Naive thymus-derived CD4-positive, alpha-beta T cell (primary cell): ENCODE measurements at regions of chr17 and their contacts with region 1.

Region 1: DNA sequence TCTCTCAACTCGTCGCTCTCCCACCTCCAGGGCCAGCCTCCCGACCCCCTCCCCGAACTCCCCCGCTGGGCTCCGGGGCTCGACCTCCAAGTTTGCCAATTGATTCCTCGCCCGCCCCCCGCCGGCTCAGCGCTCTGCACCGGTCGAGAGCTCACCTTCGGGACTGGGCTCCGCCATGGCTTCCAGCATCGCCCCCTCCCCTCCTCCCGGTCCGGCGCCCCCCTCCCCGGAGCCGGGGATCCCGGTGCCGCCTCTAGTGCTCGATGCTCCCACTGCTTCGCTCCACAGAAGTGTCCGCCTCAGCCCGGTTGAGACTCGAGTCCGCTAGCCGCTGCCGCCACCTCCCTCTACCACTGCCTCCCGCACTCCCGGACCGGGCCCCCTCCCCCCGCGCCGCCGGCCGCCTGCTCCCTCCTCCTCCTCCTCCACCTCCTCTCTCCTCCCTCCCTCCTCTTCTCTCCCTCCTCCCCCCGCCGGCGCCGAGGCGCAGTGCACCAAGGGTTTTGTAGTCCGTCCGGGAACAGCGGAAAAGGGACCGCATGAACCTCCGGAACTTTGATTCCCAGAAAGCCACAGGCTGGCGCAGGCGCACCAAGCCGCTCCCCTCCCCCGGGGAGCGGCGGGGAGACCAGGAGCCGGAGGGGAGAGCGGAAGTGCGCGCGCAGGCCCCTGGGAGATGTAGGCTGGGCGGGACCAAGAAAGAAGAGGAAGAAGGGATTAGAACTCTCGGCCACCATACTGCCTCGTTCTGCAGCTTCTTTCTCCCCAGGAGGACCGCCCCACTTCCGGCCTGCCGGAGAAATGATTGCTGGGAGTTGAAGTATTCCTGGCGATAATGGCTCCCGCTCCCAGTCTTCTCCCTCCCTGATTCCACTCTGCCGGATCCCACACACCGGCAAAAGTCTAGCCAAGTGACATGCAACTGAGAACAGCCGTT is at the start of gene PHF23:
- DNase-seq: peak; percentile 91 to 98 (median 97)
- ATAC-seq: peak; percentile 78
- H3K4me3 ChIP-seq: peak within 1 kb of the TSS; percentile 76
- H3K4me3 Mint-ChIP-seq: peak within 1 kb of the TSS; percentile 88 to 98 (median 95)
- H3K27ac ChIP-seq: peak within 1 kb of the TSS; percentile 92
- H3K27ac Mint-ChIP-seq: peak within 1 kb of the TSS; percentile 55 to 100 (median 95)
- H3K4me1 ChIP-seq: peaks cover 32 to 44% of the 10 kb centered on the region in 2 donors
- H3K4me1 Mint-ChIP-seq: peaks cover 38 to 67% (median 60%) of the 10 kb centered on the region in 7 donors
- H3K27me3 ChIP-seq: no peaks in the 10 kb centered on the region
- H3K27me3 Mint-ChIP-seq: peaks cover 0 to 7% (median 0%) of the 10 kb centered on the region in 5 donors
- total RNA-seq, gene PHF23: 12.3 to 58.7 (median 55.2) TPM

Region 2: GRCh38 chr17:7035591-7036368 is 203.6 kb before region 1 on chr17 and contains the start of gene SLC16A13:
- CTCF ChIA-PET with region 1: no interaction called
- POLR2A ChIA-PET with region 1: interaction called, 14 read pairs
- intact Hi-C with region 1: loop called in 1 of 2 experiments (anchors 2 kb)
- DNase-seq: peak; percentile 87 to 99 (median 97)
- ATAC-seq: peak; percentile 95
- H3K4me3 ChIP-seq: peak within 1 kb of the TSS; percentile 67
- H3K4me3 Mint-ChIP-seq: peak within 1 kb of the TSS; percentile 89 to 95 (median 93)
- H3K27ac ChIP-seq: peak within 1 kb of the TSS; percentile 94
- H3K27ac Mint-ChIP-seq: peak within 1 kb of the TSS; percentile 96 to 99 (median 98)
- H3K4me1 ChIP-seq: peaks cover 26 to 36% of the 10 kb centered on the region in 2 donors
- H3K4me1 Mint-ChIP-seq: peaks cover 39 to 80% (median 58%) of the 10 kb centered on the region in 7 donors
- H3K27me3 ChIP-seq: no peaks in the 10 kb centered on the region
- H3K27me3 Mint-ChIP-seq: no peaks in the 10 kb centered on the region
- total RNA-seq, gene SLC16A13: 3.4 to 20.9 (median 15.0) TPM

Region 3: DNA sequence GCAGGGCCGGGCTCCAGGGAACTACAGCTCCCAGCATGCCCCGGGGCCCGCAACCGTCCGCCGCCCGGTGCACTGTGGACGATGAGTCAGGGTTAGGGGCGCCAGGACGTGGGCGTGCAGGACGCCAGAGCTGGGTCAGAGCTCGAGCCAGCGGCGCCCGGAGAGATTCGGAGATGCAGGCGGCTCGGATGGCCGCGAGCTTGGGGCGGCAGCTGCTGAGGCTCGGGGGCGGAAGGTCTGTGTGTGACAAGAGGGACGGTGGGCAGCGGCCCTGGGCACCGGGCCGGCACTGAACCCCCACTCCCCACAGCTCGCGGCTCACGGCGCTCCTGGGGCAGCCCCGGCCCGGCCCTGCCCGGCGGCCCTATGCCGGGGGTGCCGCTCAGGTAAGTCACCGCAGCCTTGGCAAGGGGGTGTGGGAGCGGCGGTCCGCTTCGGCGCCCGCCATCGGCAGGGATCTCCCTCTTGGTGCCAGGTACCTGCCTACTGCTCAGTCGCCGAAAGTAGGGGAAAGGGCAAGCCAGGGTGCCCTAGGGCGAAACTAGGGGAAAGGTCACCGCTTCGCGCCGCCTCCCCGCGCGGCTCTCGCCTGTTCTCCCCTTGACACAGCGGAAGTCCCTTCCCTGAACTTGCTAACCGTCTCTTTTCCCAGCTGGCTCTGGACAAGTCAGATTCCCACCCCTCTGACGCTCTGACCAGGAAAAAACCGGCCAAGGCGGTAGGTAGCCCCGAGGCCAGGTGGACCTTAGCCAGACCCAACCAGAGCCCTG is 19.4 kb before region 1 on chr17 and contains the starts of genes ACADVL and DLG4:
- CTCF ChIA-PET with region 1: interaction called, 9 read pairs
- POLR2A ChIA-PET with region 1: interaction called, 265 read pairs
- intact Hi-C with region 1: loop called (anchors 1 kb)
- DNase-seq: peak; percentile 45 to 87 (median 56)
- ATAC-seq: peak; percentile 76
- H3K4me3 ChIP-seq: peak within 1 kb of the TSS; percentile 73
- H3K4me3 Mint-ChIP-seq: peak within 1 kb of the TSS; percentile 88 to 95 (median 91)
- H3K27ac ChIP-seq: peak within 1 kb of the TSS; percentile 75
- H3K27ac Mint-ChIP-seq: peak within 1 kb of the TSS; percentile 81 to 98 (median 96)
- H3K4me1 ChIP-seq: peaks cover 25 to 47% of the 10 kb centered on the region in 2 donors
- H3K4me1 Mint-ChIP-seq: peaks cover 35 to 61% (median 55%) of the 10 kb centered on the region in 7 donors
- H3K27me3 ChIP-seq: no peaks in the 10 kb centered on the region
- H3K27me3 Mint-ChIP-seq: no peaks in the 10 kb centered on the region
- total RNA-seq, gene ACADVL: 287 to 390 (median 339) TPM
- total RNA-seq, gene DLG4: 10.9 to 25.4 (median 16.5) TPM

Region 4: GRCh38 chr17:7306911-7307686 is 67.7 kb after region 1 on chr17 and contains the start of gene EIF5A:
- CTCF ChIA-PET with region 1: interaction called, 3 read pairs
- POLR2A ChIA-PET with region 1: interaction called, 13 read pairs
- intact Hi-C with region 1: loop called (anchors 1 kb)
- DNase-seq: peak; percentile 99 to 100 (median 100)
- ATAC-seq: peak; percentile 79
- H3K4me3 ChIP-seq: peak within 1 kb of the TSS; percentile 78
- H3K4me3 Mint-ChIP-seq: peak within 1 kb of the TSS; percentile 90 to 99 (median 95)
- H3K27ac ChIP-seq: peak within 1 kb of the TSS; percentile 100
- H3K27ac Mint-ChIP-seq: peak within 1 kb of the TSS; percentile 98 to 100 (median 99)
- H3K4me1 ChIP-seq: peaks cover 19 to 20% of the 10 kb centered on the region in 2 donors
- H3K4me1 Mint-ChIP-seq: peaks cover 28 to 44% (median 35%) of the 10 kb centered on the region in 7 donors
- H3K27me3 ChIP-seq: no peaks in the 10 kb centered on the region
- H3K27me3 Mint-ChIP-seq: peaks cover 0 to 9% (median 0%) of the 10 kb centered on the region in 5 donors
- total RNA-seq, gene EIF5A: 237 to 666 (median 453) TPM

Region 5: DNA sequence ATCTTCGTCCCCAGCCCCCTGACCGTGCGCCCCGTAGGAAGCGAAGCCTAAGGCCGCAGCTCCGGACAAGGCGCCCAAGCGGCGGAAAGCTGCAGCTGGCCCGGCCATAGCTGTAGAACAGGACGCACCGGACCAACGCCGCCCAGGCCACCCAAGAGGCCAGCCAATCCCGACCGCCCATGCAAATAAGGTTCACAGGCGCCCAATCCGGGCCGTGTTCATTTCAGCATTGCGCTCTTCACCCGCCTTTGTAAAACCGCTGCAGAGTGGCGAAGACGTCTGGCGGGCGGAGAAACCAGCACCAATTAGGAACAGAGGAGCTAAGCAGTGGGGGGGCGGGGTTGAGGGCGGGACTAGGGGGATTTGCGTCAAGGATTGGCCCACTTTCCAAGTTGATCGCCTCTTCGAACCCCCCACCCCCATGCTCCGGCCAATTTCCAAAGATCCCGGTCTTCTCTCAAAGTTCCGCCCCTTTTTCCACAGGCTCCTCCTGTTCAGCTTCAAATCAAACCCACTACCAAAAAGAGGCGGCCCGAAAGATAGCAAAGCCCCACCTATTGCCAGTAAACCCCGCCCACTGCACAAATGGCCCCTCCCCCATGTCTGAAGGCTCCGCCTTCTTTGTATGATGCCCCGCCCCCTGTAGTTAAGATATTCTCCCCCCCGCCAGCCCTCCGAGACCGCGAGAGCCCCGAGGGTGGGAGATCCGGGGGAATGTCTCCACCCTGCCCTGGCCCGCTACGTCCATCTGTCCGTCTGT is 164.8 kb after region 1 on chr17 and contains the start of gene TMEM256:
- CTCF ChIA-PET with region 1: no interaction called
- POLR2A ChIA-PET with region 1: no interaction called
- intact Hi-C with region 1: loop called in 1 of 2 experiments (anchors 1 kb)
- DNase-seq: peak; percentile 79 to 96 (median 91)
- ATAC-seq: peak; percentile 93
- H3K4me3 ChIP-seq: peak within 1 kb of the TSS; percentile 95
- H3K4me3 Mint-ChIP-seq: peak within 1 kb of the TSS; percentile 87 to 98 (median 96)
- H3K27ac ChIP-seq: peak within 1 kb of the TSS; percentile 78
- H3K27ac Mint-ChIP-seq: peak within 1 kb of the TSS; percentile 91 to 100 (median 96)
- H3K4me1 ChIP-seq: peaks cover 9 to 10% of the 10 kb centered on the region in 2 donors
- H3K4me1 Mint-ChIP-seq: peaks cover 8 to 25% (median 21%) of the 10 kb centered on the region in 7 donors
- H3K27me3 ChIP-seq: no peaks in the 10 kb centered on the region
- H3K27me3 Mint-ChIP-seq: peaks cover 0 to 23% (median 0%) of the 10 kb centered on the region in 5 donors
- total RNA-seq, gene TMEM256: 31.5 to 58.5 (median 48.2) TPM

Region 6: DNA sequence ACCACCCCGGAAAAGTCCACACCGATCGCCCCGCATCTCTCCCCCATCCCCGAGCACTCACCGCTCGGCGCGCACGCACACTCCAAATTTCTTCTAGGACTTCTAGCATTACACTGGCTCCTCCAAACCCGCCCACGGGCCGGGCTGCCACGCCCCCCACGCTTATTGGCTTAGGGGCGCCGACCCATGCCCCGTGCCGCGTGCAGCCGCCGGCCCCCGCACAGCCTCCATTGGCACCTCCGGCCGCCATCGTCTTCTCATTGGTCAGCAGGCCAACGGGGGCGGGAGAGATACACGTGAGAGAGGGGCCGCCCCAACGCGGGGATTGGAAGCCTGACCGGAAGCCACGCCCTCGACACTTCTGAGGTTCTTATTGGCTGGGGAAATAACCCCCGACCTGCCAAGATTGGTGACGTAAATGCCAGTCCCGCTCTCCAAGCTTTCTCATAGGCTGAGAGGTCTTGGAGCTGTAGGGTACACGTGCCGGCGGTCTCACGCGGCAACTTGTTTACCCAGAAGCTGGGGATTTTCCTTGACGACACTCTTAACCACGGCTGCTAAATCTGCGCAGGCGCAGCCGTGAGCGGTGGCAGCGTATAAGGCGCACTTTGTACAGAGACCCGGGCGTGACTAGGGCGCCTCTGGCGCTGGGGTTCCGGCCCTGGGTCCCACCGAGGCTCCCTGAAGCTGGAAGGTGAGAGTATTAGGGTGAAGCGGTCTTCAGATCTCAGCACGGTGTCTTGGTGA is 917.1 kb after region 1 on chr17:
- CTCF ChIA-PET with region 1: no interaction called
- POLR2A ChIA-PET with region 1: no interaction called
- intact Hi-C with region 1: loop called (anchors 2 to 10 kb)
- DNase-seq: peak; percentile 96 to 100 (median 100)
- ATAC-seq: peak; percentile 83
- H3K4me3 ChIP-seq: peak overlapping the region; percentile 93
- H3K4me3 Mint-ChIP-seq: no peak overlapping the region
- H3K27ac ChIP-seq: peak overlapping the region; percentile 97
- H3K27ac Mint-ChIP-seq: no peak overlapping the region
- H3K4me1 ChIP-seq: peaks cover 58 to 75% of the 10 kb centered on the region in 2 donors
- H3K4me1 Mint-ChIP-seq: peaks cover 33 to 73% (median 65%) of the 10 kb centered on the region in 7 donors
- H3K27me3 ChIP-seq: no peaks in the 10 kb centered on the region
- H3K27me3 Mint-ChIP-seq: no peaks in the 10 kb centered on the region